Mammary epithelial cell (primary cell): ENCODE measurements at regions of chr11 and their contacts with region 1.

Region 1: DNA sequence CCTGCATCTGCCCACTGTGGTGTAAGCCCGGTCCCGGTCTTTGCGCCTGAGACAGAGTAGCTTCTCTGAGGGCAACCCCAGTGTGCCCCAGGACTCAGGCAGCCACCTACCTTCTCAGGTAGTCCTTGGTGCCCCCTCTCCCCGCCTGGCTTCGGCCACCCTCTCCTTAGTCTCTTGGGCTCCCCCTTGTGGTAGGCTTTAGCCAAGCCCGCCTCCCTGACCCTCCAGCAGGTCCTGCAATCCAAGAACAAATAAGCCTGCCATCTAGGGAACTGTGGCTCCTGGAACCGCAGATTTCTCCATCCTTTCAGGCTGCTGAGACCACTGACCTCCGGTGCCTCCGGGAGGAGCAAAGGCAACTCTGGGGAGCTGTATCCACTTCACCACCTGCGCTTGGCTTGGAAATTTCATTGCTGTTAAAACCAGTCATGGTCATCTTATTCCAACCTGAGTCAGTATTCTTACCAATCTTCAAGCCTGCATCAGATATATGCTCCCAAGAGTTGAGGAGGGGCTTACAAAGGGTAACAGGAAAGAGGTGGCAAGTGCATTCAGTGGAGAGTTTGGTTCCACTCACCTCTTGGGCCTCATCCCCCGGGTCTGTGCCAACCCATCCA is 52.8 kb upstream of the TENM4 start:
- DNase-seq: peak; percentile 50
- H3K4me3 ChIP-seq: no peak overlapping the region
- H3K27ac ChIP-seq: no peak overlapping the region
- H3K4me1 ChIP-seq: no peaks in the 10 kb centered on the region
- H3K27me3 ChIP-seq: no peaks in the 10 kb centered on the region
- CTCF ChIP-seq: peak; percentile 85 to 97

Region 2: DNA sequence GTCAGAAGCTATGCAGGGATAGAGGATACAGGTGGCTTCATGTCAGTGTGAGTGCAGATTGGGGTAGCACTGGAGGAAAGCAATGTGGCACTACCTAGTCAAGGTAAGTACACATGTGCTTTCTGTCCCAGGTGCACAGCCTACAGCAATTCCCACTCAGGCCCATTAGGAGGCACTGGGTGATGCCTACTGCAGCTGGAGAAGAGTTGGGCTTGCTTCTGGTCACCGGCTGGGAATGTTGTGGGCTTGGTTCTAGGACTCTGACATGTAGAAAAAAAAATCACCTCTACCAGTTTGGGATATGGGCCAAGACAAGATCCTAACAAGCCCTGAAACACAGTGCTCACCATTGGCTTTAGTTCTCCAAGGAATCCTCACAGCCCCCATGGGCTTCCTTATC is 122.5 kb before region 1 on chr11:
- CTCF ChIA-PET with region 1: no interaction called
- dilution Hi-C with region 1: no loop called
- in situ Hi-C with region 1: no loop called
- intact Hi-C with region 1: loop called (anchors 1 kb)
- DNase-seq: peak; percentile 65
- H3K4me3 ChIP-seq: no peak overlapping the region
- H3K27ac ChIP-seq: no peak overlapping the region
- H3K4me1 ChIP-seq: peaks cover 20% of the 10 kb centered on the region
- H3K27me3 ChIP-seq: no peaks in the 10 kb centered on the region
- CTCF ChIP-seq: peak; percentile 77

Region 3: GRCh38 chr11:79440441-79441194 is 53.0 kb before region 1 on chr11 and contains the start of gene TENM4:
- CTCF ChIA-PET with region 1: no interaction called
- dilution Hi-C with region 1: no loop called
- in situ Hi-C with region 1: no loop called
- intact Hi-C with region 1: loop called (anchors 1 kb)
- DNase-seq: peak; percentile 72
- H3K4me3 ChIP-seq: peak within 1 kb of the TSS; percentile 71 to 95 (median 88)
- H3K27ac ChIP-seq: peak within 1 kb of the TSS; percentile 43
- H3K4me1 ChIP-seq: peaks cover 16% of the 10 kb centered on the region
- H3K27me3 ChIP-seq: no peaks in the 10 kb centered on the region
- CTCF ChIP-seq: peak; percentile 40 to 47
- total RNA-seq, gene TENM4: 4.8 to 26.5 TPM

Region 4: DNA sequence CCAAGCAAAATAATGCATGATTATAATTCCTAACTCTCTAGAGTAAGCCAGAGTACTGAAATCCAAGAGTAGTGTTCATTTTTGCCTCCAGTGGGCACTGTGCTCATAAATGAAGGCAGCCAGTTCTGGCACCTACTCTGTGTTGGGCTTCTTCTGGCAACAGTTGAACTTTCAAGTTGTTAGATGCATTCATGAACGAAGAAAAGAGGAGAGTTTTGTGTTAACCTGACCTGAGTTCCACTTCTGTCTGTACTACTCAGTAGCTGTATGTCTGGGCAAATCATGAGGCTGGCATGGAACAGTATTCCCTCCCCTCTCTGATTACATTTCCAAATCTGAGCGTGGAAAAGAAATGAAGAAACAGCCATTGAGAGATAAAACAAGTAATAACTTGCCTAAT is 32.5 kb before region 1 on chr11:
- CTCF ChIA-PET with region 1: no interaction called
- dilution Hi-C with region 1: no loop called
- in situ Hi-C with region 1: no loop called
- intact Hi-C with region 1: loop called (anchors 1 kb)
- DNase-seq: peak; percentile 54
- H3K4me3 ChIP-seq: peak overlapping the region in 1 of 3 experiments; percentile 30
- H3K27ac ChIP-seq: peak overlapping the region; percentile 12
- H3K4me1 ChIP-seq: peaks cover 8% of the 10 kb centered on the region
- H3K27me3 ChIP-seq: no peaks in the 10 kb centered on the region
- CTCF ChIP-seq: peak; percentile 74 to 83

Region 5: GRCh38 chr11:79482800-79483199 is 10.9 kb before region 1 on chr11:
- CTCF ChIA-PET with region 1: no interaction called
- dilution Hi-C with region 1: no loop called
- in situ Hi-C with region 1: no loop called
- intact Hi-C with region 1: no loop called
- DNase-seq: no peak
- H3K4me3 ChIP-seq: no peak overlapping the region
- H3K27ac ChIP-seq: no peak overlapping the region
- H3K4me1 ChIP-seq: no peaks in the 10 kb centered on the region
- H3K27me3 ChIP-seq: no peaks in the 10 kb centered on the region
- CTCF ChIP-seq: no peak

Region 6: GRCh38 chr11:80155412-80156017 is 661.9 kb after region 1 on chr11:
- CTCF ChIA-PET with region 1: no interaction called
- dilution Hi-C with region 1: no loop called
- in situ Hi-C with region 1: no loop called
- intact Hi-C with region 1: loop called (anchors 1 kb)
- DNase-seq: peak; percentile 17
- H3K4me3 ChIP-seq: no peak overlapping the region
- H3K27ac ChIP-seq: no peak overlapping the region
- H3K4me1 ChIP-seq: no peaks in the 10 kb centered on the region
- H3K27me3 ChIP-seq: peaks cover 2% of the 10 kb centered on the region
- CTCF ChIP-seq: peak; percentile 63 to 74